ENCODE measurements at regions of chr12 and their contacts with region 1.

Region 1: DNA sequence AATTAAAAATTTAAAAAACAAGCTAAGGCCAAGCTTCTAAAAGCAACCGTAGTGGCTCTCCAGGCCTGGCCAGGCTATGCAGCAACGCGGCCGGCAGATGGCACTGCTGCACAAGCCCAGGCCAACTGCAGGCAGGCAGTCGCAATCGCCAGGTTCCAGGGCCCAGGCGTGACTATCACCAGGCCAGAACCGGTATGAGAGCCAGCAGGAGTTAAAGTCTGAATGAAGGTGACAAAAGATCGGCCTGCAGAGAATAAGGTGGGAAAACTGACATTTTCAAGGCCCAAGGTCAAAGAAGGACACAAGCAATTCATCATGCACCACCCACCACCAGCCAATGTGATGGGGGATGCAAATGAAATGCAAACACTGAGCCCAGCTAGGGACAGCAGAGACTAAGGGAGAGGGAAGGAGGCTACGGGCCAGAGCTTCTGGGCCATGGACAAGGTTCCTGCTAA is 43.6 kb upstream of the ANO2 start:
- DNase-seq: peak; percentile 92
- ATAC-seq: peak; percentile 97
- H3K4me3 Mint-ChIP-seq: no peak overlapping the region
- H3K27ac Mint-ChIP-seq: peak overlapping the region; percentile 95; the same call in 1 of the 2 replicates
- H3K4me1 Mint-ChIP-seq: peaks cover 30% of the 10 kb centered on the region
- H3K27me3 Mint-ChIP-seq: no peaks in the 10 kb centered on the region; the same call in 1 of the 2 replicates
- CTCF ChIP-seq: peak; percentile 83

Region 2: DNA sequence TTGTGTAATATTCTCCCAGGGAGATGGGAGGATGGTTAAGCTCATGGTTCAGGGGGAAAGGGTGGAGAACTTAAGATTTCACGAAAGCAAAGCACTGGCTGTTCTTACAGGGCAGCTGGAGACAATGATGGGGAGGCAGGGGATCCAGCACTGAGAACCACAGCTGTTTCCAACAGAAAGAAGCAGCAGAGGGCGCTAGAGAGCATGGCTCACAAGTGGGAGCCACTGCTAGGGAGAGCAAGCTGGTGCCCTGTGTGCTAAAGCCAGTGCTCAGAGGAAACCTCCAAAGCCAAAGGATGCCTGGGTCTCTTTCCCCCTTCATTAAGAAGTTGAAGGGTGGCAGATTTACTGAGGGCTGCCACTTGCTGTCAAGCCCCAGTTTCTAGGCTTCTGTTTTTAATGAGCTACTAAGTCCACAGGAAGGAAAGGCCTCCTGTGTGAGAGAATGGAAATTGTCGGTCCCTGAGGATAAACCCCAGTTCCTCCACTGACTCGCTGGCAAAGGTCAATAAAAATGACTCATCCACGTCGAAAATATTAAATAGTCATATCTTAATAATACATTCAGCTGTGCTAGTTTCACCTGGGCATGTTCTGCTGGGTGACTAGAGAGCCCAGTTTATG is 243.3 kb before region 1 on chr12:
- CTCF ChIA-PET with region 1: interaction called, 12 read pairs
- POLR2A ChIA-PET with region 1: no interaction called
- DNase-seq: peak; percentile 91
- ATAC-seq: peak; percentile 99
- H3K4me3 Mint-ChIP-seq: no peak overlapping the region
- H3K27ac Mint-ChIP-seq: no peak overlapping the region
- H3K4me1 Mint-ChIP-seq: no peaks in the 10 kb centered on the region
- H3K27me3 Mint-ChIP-seq: no peaks in the 10 kb centered on the region
- CTCF ChIP-seq: peak; percentile 96

Region 3: DNA sequence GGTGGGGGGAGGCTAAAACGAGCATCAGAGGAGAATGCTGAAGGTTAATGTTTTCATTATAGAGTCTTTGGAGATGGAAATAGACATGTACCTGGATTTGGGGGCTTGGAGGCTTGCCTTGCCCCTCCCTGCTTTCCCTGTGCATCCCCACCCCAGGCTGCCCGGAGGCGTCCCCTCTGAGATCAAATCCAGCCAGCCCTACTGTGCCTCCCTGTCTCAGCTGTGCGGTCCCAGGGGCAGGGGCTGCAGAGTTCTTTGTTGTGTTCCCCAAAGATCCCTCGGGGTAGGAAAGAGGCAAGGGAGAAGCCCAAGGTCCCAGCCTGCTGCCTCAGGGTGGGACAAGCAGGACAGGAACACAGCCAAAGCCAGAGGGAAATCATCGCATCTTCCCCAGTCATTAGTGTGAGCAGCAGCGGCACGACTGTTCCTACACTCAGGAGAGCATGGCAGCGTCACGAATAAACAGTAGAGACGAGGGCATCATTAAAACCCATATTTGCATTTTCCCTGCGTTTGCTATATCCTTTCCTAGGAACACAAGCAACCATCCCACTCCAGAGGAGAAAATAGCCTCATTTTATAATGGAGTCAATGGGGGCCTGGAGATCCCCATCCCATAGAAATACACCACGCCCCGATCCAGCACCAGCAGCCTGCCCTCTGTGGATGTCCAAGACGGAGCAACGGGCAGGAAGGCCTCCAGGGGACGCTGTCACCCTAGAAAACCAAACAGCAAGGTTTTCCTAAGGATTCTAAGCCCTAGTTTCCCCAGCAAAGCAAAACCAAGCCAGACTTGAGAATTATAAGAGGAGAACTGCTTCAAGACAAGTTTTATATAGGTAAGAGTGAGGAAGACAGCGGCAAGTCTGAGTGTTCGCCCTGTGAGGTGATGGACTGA is 76.0 kb before region 1 on chr12:
- CTCF ChIA-PET with region 1: interaction called, 20 read pairs
- POLR2A ChIA-PET with region 1: no interaction called
- DNase-seq: peak; percentile 85
- ATAC-seq: peak; percentile 96
- H3K4me3 Mint-ChIP-seq: no peak overlapping the region
- H3K27ac Mint-ChIP-seq: no peak overlapping the region
- H3K4me1 Mint-ChIP-seq: no peaks in the 10 kb centered on the region
- H3K27me3 Mint-ChIP-seq: no peaks in the 10 kb centered on the region
- CTCF ChIP-seq: peak; percentile 84

Region 4: DNA sequence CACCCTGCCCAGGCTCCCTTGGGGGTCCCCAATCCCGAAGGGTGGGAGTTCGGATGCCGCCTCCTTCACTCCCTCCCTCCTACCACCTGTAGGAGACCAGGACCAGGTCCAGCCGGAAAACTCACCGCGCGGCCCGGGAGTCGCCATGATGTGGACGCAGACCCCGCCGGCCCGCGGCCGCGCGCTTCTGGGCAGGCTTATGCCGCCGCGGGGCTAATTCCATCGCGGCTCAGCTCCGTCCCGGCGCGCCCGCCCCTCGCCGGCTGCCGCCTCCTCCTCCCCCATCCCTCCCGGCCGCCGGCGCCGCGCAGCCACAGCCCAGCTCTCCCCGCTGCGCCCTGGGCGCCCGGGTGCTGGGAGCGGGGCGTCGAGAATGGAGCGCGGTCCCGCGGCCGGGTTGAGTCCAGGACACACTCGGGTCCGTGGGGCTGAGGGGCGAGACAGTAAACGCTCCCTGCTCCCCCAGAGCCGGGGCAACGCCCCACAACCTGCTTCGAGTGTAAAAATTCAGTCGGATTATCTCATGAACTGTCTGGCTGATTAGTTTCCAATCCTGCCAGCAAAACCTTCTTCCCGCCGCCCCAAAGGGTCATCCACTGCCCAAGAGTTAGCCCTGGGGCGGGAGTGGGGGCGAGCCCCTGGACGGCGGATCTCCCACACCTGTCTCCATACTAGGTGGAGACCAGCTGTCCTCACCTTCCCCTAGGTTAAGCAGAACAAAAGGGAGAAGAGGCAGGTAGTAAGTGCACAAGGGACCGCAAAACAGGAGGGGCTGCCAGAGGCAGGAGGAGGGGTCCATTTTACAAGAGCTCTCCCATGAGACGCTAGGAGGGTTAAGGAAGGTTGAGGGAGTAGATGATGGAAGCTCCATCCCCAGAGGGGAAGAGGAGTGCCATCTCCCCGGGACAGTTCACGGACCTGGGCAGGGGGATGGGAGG is 43.3 kb before region 1 on chr12 and contains the start of gene ANO2:
- CTCF ChIA-PET with region 1: interaction called, 10 read pairs
- POLR2A ChIA-PET with region 1: no interaction called
- DNase-seq: peak; percentile 75
- ATAC-seq: peak; percentile 87
- H3K4me3 Mint-ChIP-seq: peak within 1 kb of the TSS; percentile 92
- H3K27ac Mint-ChIP-seq: peak within 1 kb of the TSS; percentile 78
- H3K4me1 Mint-ChIP-seq: peaks cover 27% of the 10 kb centered on the region
- H3K27me3 Mint-ChIP-seq: peaks cover 52% of the 10 kb centered on the region
- CTCF ChIP-seq: no peak
- total RNA-seq, gene ANO2: 2.8 to 4.0 TPM (median 3.1 TPM) in 3 replicates

Region 5: DNA sequence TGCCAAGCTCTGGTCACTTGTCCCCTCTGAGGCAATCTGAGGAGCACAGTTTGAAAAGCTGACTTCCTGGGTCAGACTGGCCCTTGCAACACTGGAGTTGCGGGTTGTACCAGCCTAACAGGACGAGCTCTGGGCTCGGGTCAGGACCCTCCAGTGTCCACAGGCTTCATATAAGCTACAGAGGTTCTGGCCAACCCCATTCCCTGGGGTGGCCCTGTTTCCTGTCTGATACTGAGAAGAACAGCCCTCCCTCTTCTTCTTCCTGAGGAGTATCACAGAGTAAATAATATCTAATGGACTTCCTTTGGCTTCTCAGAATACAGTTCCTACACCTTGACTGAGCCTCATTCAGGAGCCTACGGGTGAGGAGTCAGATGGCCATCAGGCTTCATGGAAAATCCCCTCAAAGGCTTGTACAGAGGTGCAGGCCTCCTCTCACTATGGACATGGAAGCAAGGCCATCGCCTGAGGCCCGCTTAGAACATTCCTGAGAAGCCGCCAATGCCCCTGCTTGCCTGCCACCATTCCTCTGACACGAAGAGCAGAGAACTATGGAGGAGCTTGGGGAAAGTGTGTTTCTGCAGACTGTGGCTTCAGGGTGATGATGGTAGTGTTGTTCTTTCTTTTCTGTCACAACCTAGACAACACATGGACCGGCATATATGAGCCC is 15.1 kb before region 1 on chr12:
- CTCF ChIA-PET with region 1: interaction called, 17 read pairs
- POLR2A ChIA-PET with region 1: no interaction called
- DNase-seq: no peak
- ATAC-seq: no peak
- H3K4me3 Mint-ChIP-seq: no peak overlapping the region
- H3K27ac Mint-ChIP-seq: no peak overlapping the region
- H3K4me1 Mint-ChIP-seq: no peaks in the 10 kb centered on the region
- H3K27me3 Mint-ChIP-seq: peaks cover 3% of the 10 kb centered on the region; the same call in 1 of the 2 replicates
- CTCF ChIP-seq: no peak

Region 6: GRCh38 chr12:6047249-6048237 is 58.9 kb after region 1 on chr12:
- CTCF ChIA-PET with region 1: interaction called, 20 read pairs
- POLR2A ChIA-PET with region 1: no interaction called
- DNase-seq: no peak
- ATAC-seq: no peak
- H3K4me3 Mint-ChIP-seq: no peak overlapping the region
- H3K27ac Mint-ChIP-seq: no peak overlapping the region
- H3K4me1 Mint-ChIP-seq: no peaks in the 10 kb centered on the region
- H3K27me3 Mint-ChIP-seq: no peaks in the 10 kb centered on the region; the same call in 1 of the 2 replicates
- CTCF ChIP-seq: no peak

Region 7: DNA sequence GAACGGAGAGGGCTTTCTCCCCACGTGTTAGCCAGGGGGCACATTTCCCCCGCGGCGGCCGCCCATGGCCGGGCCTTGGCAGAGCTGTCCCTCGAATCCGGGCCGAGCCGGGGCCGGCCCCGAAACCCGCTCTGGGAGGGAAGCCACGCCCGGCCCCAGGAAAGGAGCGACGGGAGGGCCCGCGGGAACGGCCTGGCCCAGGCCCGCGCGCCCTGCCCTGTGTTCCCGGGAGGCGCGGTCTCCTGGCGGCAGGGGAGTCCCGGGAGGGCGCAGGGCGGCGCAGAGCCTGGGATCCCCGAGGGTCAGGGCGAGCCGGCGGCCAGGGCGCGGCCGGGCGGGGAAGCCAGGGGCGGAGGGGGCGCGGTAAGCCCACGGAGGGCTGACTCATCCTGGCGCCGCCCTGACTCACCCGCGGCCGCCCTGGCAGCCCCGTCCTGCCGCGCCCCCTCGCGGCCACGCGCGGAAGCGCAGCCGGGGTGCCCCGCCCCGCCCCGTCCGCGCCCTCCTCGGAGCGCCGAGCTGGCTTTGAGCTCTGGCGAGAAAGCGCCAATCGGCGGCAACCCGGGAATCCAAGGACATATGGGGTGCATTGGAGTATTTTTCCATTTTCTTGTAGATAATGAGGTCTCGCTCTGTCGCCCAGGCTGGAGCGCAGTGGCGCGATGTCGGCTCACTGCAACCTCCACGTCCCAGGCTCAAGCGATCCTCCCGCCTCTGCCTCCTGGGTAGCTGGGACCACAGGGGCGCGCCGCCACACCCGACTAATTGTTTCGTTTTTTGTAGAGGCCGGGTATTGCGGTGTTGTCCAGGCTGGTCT is 290.0 kb after region 1 on chr12:
- CTCF ChIA-PET with region 1: interaction called, 29 read pairs
- POLR2A ChIA-PET with region 1: no interaction called
- DNase-seq: peak; percentile 85
- ATAC-seq: peak; percentile 65
- H3K4me3 Mint-ChIP-seq: peak overlapping the region; percentile 76
- H3K27ac Mint-ChIP-seq: no peak overlapping the region
- H3K4me1 Mint-ChIP-seq: peaks cover 59% of the 10 kb centered on the region
- H3K27me3 Mint-ChIP-seq: peaks cover 5% of the 10 kb centered on the region
- CTCF ChIP-seq: peak; percentile 99

Region 8: GRCh38 chr12:6367065-6367968 is 378.6 kb after region 1 on chr12:
- CTCF ChIA-PET with region 1: no interaction called
- POLR2A ChIA-PET with region 1: no interaction called
- DNase-seq: no peak
- ATAC-seq: no peak
- H3K4me3 Mint-ChIP-seq: no peak overlapping the region
- H3K27ac Mint-ChIP-seq: peak overlapping the region; percentile 33; the same call in 1 of the 2 replicates
- H3K4me1 Mint-ChIP-seq: peaks cover 58% of the 10 kb centered on the region
- H3K27me3 Mint-ChIP-seq: no peaks in the 10 kb centered on the region
- CTCF ChIP-seq: no peak

Measured in WTC11 (cell line).